Upper lobe of right lung (tissue), 1 donor: ENCODE measurements at regions of chr14 and their contacts with region 1.

Region 1: DNA sequence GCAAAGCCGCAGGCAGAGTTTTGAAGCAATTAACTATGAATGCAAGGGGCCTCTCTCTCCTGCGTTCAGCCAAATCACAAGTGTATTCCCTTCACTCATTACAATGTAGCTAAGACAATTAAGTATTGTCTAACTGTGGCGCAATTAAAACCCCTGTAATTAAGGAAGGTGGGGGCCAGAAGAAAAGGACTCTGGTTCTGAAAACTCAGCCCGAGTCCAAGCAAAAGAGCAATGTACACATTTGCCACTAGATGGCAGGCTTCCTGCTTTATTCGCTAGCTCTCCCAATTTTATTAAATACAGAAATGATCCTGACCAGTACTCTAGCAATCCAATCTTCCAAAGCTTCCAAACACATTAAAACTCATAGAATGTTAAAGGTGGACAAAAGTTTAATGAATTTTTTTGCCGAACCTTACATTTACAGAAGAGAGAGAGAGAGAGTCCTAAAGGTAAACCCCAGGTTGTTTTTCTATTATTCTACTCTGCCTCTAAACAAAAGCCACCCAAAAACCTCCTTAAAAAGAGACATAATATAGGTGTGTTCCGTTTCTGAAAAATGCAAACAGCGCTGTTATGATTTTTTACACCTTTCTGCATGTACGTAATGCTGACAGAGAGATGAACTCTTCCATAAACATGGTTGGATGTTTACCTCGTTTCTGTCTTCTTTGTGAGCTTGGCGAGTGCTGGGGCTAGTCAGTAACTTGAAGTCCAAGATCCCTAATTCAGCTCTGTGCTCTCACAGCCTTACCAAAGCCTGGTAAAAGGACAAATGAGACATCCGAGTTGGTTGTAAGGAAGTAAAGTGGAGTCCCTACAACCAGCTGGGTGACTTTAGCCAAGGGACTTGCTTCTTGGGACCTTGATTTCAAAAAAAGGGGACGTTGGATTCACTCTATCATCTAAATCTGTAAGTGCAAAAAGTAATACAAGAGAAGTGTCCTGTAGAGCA is 50.9 kb upstream of the VASH1 start:
- DNase-seq: no peak
- ATAC-seq: peak; percentile 80
- H3K4me3 ChIP-seq: no peak overlapping the region
- H3K27ac ChIP-seq: no peak overlapping the region
- H3K4me1 ChIP-seq: peaks cover 6% of the 10 kb centered on the region
- H3K27me3 ChIP-seq: no peaks in the 10 kb centered on the region
- CTCF ChIP-seq: peak; percentile 82

Region 2: GRCh38 chr14:76584271-76584702 is 126.0 kb before region 1 on chr14:
- intact Hi-C with region 1: no loop called
- DNase-seq: no peak
- ATAC-seq: peak; percentile 40
- H3K4me3 ChIP-seq: no peak overlapping the region
- H3K27ac ChIP-seq: no peak overlapping the region
- H3K4me1 ChIP-seq: no peaks in the 10 kb centered on the region
- H3K27me3 ChIP-seq: no peaks in the 10 kb centered on the region
- CTCF ChIP-seq: no peak

Region 3: GRCh38 chr14:76784266-76785264 is 74.2 kb after region 1 on chr14:
- intact Hi-C with region 1: loop called (anchors 10 kb)
- DNase-seq: peak; percentile 80
- ATAC-seq: peak; percentile 93
- H3K4me3 ChIP-seq: no peak overlapping the region
- H3K27ac ChIP-seq: no peak overlapping the region
- H3K4me1 ChIP-seq: peaks cover 15% of the 10 kb centered on the region
- H3K27me3 ChIP-seq: no peaks in the 10 kb centered on the region
- CTCF ChIP-seq: peak; percentile 82